Common myeloid progenitor, CD34-positive (primary cell): ENCODE measurements at regions of chr2 and their contacts with region 1.

Region 1: GRCh38 chr2:131104487-131105155 is 515 bp upstream of the PLEKHB2 start:
- DNase-seq: peak; percentile 50 to 85 (median 62)
- H3K4me3 ChIP-seq: peak overlapping the region; percentile 86 to 100 (median 93)
- H3K27ac ChIP-seq: peak overlapping the region; percentile 84 to 93
- H3K4me1 ChIP-seq: peaks cover 17 to 30% (median 24%) of the 10 kb centered on the region in 4 experiments
- H3K27me3 ChIP-seq: no peaks in the 10 kb centered on the region

Region 2: GRCh38 chr2:131076707-131077106 is 27.9 kb before region 1 on chr2:
- CTCF ChIA-PET with region 1: no interaction called
- POLR2A ChIA-PET with region 1: no interaction called
- DNase-seq: no peak
- H3K4me3 ChIP-seq: no peak overlapping the region
- H3K27ac ChIP-seq: no peak overlapping the region
- H3K4me1 ChIP-seq: peaks cover 0 to 3% (median 0%) of the 10 kb centered on the region in 4 experiments
- H3K27me3 ChIP-seq: no peaks in the 10 kb centered on the region

Region 3: GRCh38 chr2:131093006-131093695 is 11.5 kb before region 1 on chr2 and contains the start of gene FAM168B:
- CTCF ChIA-PET with region 1: interaction called, 13 read pairs
- POLR2A ChIA-PET with region 1: interaction called, 5 read pairs
- DNase-seq: peak; percentile 92 to 96 (median 95)
- H3K4me3 ChIP-seq: peak within 1 kb of the TSS; percentile 74 to 94 (median 88)
- H3K27ac ChIP-seq: peak within 1 kb of the TSS; percentile 68 to 91
- H3K4me1 ChIP-seq: peaks cover 7 to 12% (median 9%) of the 10 kb centered on the region in 4 experiments
- H3K27me3 ChIP-seq: no peaks in the 10 kb centered on the region